ENCODE measurements at regions of chr4 and their contacts with region 1.

Region 1: DNA sequence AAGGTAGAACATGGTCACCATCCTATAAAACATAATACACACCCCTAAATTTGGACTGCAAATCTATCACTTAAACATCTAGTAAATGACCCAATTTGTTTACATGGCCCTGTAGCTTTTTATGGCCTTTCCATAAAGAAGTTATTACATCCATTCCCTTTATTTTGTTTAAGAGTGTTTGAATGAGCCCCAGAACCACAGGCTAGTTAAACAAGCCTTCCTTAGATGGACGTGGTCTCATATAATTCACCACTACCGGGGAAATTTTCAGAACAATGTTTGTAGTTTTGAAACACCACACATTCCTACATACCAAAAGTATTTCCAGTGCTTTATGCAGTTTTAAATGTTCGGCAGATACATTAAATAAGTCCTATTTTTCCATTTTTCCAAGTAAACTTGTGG is 12.3 kb downstream of the PDGFC start:
- DNase-seq: peak; percentile 80
- ATAC-seq: peak; percentile 72
- H3K4me3 ChIP-seq: peak overlapping the region; percentile 65
- H3K27ac ChIP-seq: peak overlapping the region; percentile 86
- H3K4me1 ChIP-seq: peaks cover 80% of the 10 kb centered on the region
- H3K27me3 ChIP-seq: no peaks in the 10 kb centered on the region
- CTCF ChIP-seq: no peak

Region 2: GRCh38 chr4:156779774-156780173 is 179.5 kb before region 1 on chr4:
- CTCF ChIA-PET with region 1: no interaction called
- POLR2A ChIA-PET with region 1: no interaction called
- intact Hi-C with region 1: loop called (anchors 5 kb)
- DNase-seq: peak; percentile 84
- ATAC-seq: peak; percentile 66
- H3K4me3 ChIP-seq: no peak overlapping the region
- H3K27ac ChIP-seq: peak overlapping the region; percentile 79
- H3K4me1 ChIP-seq: peaks cover 57% of the 10 kb centered on the region
- H3K27me3 ChIP-seq: no peaks in the 10 kb centered on the region
- CTCF ChIP-seq: no peak

Region 3: GRCh38 chr4:156790866-156791265 is 168.4 kb before region 1 on chr4:
- CTCF ChIA-PET with region 1: no interaction called
- POLR2A ChIA-PET with region 1: no interaction called
- intact Hi-C with region 1: loop called (anchors 5 kb)
- DNase-seq: peak; percentile 85
- ATAC-seq: peak; percentile 26
- H3K4me3 ChIP-seq: no peak overlapping the region
- H3K27ac ChIP-seq: no peak overlapping the region
- H3K4me1 ChIP-seq: peaks cover 71% of the 10 kb centered on the region
- H3K27me3 ChIP-seq: no peaks in the 10 kb centered on the region
- CTCF ChIP-seq: no peak

Region 4: GRCh38 chr4:156865451-156865850 is 93.8 kb before region 1 on chr4:
- CTCF ChIA-PET with region 1: no interaction called
- POLR2A ChIA-PET with region 1: no interaction called
- intact Hi-C with region 1: no loop called
- DNase-seq: no peak
- ATAC-seq: no peak
- H3K4me3 ChIP-seq: no peak overlapping the region
- H3K27ac ChIP-seq: no peak overlapping the region
- H3K4me1 ChIP-seq: no peaks in the 10 kb centered on the region
- H3K27me3 ChIP-seq: no peaks in the 10 kb centered on the region
- CTCF ChIP-seq: no peak

Region 5: GRCh38 chr4:156901871-156902270 is 57.4 kb before region 1 on chr4:
- CTCF ChIA-PET with region 1: no interaction called
- POLR2A ChIA-PET with region 1: no interaction called
- intact Hi-C with region 1: no loop called
- DNase-seq: peak; percentile 4
- ATAC-seq: peak; percentile 43; the same call in 1 of the 2 replicates
- H3K4me3 ChIP-seq: no peak overlapping the region
- H3K27ac ChIP-seq: no peak overlapping the region
- H3K4me1 ChIP-seq: peaks cover 19% of the 10 kb centered on the region; the same call in 1 of the 2 replicates
- H3K27me3 ChIP-seq: no peaks in the 10 kb centered on the region
- CTCF ChIP-seq: no peak

Region 6: DNA sequence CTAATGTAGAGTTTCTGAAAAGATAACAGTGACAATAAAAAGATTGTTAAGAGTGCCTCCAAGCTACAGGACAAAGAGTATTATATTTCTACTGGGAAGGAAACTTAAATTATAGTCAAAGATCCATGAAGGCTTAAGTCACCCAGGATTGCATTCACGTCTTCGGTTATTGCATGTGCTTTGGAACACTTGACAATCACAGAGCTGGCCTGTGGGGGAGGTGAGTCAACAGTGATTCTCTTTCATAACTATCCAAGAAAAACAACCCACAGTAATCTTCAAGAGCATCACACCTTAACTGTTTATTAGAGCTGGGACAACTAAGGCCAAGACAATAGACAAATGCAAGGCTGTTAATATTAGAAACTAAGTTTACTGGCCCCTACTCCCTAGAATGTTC is 28.0 kb before region 1 on chr4:
- CTCF ChIA-PET with region 1: no interaction called
- POLR2A ChIA-PET with region 1: no interaction called
- intact Hi-C with region 1: loop called (anchors 1 kb)
- DNase-seq: peak; percentile 82
- ATAC-seq: peak; percentile 56
- H3K4me3 ChIP-seq: no peak overlapping the region; the same call in 1 of the 2 replicates
- H3K27ac ChIP-seq: peak overlapping the region; percentile 83
- H3K4me1 ChIP-seq: peaks cover 35% of the 10 kb centered on the region
- H3K27me3 ChIP-seq: no peaks in the 10 kb centered on the region
- CTCF ChIP-seq: no peak

Region 7: DNA sequence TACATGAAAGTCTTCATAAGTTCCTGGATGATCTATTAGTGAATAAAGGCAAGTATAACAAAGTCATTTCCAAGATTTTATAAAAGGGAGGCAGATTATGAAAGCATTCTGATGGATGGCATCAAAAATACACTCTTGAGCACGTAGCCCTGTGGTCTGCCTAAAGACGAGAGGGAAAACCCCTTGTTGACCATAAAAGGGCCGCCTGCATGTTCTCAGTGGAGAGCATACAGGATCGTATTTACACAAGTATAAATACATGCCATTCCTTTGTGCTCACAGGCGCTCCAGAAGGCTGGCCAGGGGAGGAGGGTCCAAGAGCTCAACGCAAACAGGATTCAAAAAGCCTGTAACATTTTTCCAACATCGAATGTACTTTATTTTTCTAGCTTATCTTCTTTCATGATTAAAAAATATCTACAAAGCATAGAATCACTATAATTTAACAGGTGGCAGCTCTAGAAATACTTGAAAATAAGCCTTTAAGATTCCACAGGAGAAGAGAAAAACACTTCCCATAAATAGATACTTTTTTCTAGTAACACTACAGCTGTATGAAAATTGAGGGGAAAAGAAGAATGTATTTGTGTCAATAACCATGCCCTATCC is 17.3 kb before region 1 on chr4:
- CTCF ChIA-PET with region 1: no interaction called
- POLR2A ChIA-PET with region 1: interaction called, 5 read pairs
- intact Hi-C with region 1: loop called (anchors 2 kb)
- DNase-seq: peak; percentile 90
- ATAC-seq: peak; percentile 85
- H3K4me3 ChIP-seq: peak overlapping the region; percentile 58
- H3K27ac ChIP-seq: peak overlapping the region; percentile 70
- H3K4me1 ChIP-seq: peaks cover 59% of the 10 kb centered on the region
- H3K27me3 ChIP-seq: no peaks in the 10 kb centered on the region
- CTCF ChIP-seq: no peak

Region 8: DNA sequence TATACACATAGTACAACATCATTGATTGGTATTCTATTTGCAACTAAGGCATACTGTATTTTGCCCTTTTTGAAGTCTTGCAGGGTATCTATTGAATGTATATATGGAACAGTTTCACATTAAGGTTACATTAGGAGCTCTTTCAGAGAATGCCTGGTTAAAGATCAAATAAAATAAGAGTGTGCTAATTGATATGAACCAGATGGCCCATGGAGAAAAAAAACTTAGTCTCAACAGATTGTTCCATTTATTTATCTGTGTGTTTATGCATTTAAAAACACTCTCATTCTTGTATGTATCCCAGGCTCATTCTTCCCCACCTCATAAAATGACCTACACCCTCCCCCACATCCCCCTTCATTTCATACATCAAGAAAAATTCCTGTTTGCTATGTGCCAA is 226.1 kb after region 1 on chr4:
- CTCF ChIA-PET with region 1: no interaction called
- POLR2A ChIA-PET with region 1: no interaction called
- intact Hi-C with region 1: no loop called
- DNase-seq: no peak
- ATAC-seq: no peak
- H3K4me3 ChIP-seq: no peak overlapping the region
- H3K27ac ChIP-seq: no peak overlapping the region
- H3K4me1 ChIP-seq: no peaks in the 10 kb centered on the region
- H3K27me3 ChIP-seq: no peaks in the 10 kb centered on the region; the same call in 1 of the 2 replicates
- CTCF ChIP-seq: no peak